ENCODE measurements at regions of chr14 and their contacts with region 1.

Region 1: GRCh38 chr14:57378669-57379068 is 11.7 kb upstream of the NAA30 start:
- DNase-seq: no peak
- H3K4me3 Mint-ChIP-seq: no peak overlapping the region
- H3K27ac Mint-ChIP-seq: no peak overlapping the region
- H3K4me1 Mint-ChIP-seq: peaks cover 6% of the 10 kb centered on the region
- H3K27me3 Mint-ChIP-seq: no peaks in the 10 kb centered on the region
- CTCF ChIP-seq: no peak

Region 2: GRCh38 chr14:56491299-56492285 is 887.1 kb before region 1 on chr14:
- CTCF ChIA-PET with region 1: no interaction called
- intact Hi-C with region 1: loop called (anchors 5 kb)
- DNase-seq: peak; percentile 41
- H3K4me3 Mint-ChIP-seq: no peak overlapping the region
- H3K27ac Mint-ChIP-seq: no peak overlapping the region
- H3K4me1 Mint-ChIP-seq: no peaks in the 10 kb centered on the region
- H3K27me3 Mint-ChIP-seq: peaks cover 65% of the 10 kb centered on the region
- CTCF ChIP-seq: peak; percentile 66

Region 3: GRCh38 chr14:57209561-57209960 is 169.1 kb before region 1 on chr14:
- CTCF ChIA-PET with region 1: no interaction called
- intact Hi-C with region 1: loop called (anchors 5 kb)
- DNase-seq: no peak
- H3K4me3 Mint-ChIP-seq: no peak overlapping the region
- H3K27ac Mint-ChIP-seq: no peak overlapping the region
- H3K4me1 Mint-ChIP-seq: no peaks in the 10 kb centered on the region
- H3K27me3 Mint-ChIP-seq: no peaks in the 10 kb centered on the region
- CTCF ChIP-seq: no peak

Region 4: DNA sequence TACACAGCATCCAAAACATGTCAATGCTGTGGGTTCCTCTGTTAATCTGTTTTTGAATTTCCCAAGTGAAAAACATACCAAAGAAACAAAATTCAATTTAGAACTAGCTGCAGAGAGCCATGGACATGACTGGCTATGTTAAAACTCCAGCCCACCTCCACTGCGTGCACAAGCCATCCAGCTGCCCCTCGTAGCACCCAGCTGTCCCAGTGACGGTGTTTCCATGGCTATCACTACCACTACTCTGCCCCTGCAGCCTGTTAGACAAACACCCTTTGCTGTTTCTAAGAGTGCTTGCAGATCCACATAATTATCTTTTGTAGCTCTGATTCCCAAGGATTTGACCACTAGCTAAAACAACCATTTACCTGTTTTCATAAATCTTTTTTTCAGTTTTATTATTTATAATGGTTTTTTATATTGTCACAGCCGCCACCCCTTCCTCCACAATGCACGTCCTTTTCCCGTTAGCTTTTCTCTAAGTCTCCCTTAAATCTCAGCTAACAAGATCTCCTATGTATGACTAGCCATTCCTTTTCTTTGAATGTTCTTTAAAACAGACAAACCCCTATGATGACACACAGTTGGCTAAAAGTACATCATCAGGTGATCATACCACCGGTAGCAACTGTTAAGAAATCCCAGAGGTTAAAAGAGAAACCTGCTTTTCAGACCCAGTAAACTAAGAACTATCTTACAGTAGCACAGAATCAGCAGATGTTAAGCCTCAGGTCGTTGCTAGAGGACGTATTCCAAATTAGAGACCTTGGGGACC is 26.1 kb before region 1 on chr14:
- CTCF ChIA-PET with region 1: interaction called, 10 read pairs
- intact Hi-C with region 1: no loop called
- DNase-seq: no peak
- H3K4me3 Mint-ChIP-seq: no peak overlapping the region
- H3K27ac Mint-ChIP-seq: no peak overlapping the region
- H3K4me1 Mint-ChIP-seq: peaks cover 11% of the 10 kb centered on the region
- H3K27me3 Mint-ChIP-seq: no peaks in the 10 kb centered on the region
- CTCF ChIP-seq: no peak